Caco-2 (cell line): ENCODE measurements at regions of chr5 and their contacts with region 1.

Region 1: DNA sequence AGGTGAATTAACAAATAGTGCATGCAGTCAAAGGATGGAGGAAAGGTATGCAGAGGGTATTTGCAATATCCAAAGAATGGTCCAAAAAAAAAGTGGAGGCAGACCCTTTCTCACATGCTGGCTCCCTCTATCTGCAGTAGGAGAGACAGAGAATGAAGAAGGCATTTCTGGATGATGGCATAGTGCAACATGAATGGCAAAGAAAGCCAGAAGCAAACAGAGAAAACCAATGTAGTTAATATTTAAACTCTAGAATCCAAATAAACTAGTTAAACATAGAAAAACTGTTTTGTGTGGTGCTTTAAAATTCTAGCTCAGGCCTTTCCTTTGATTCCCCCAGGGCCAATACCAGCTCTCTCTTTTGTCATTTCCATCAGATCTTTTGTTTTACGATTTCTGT is 403.1 kb upstream of the WWC1 start:
- DNase-seq: peak in 1 of 2 experiments; percentile 28
- H3K4me3 ChIP-seq: no peak overlapping the region
- H3K4me3 Mint-ChIP-seq: no peak overlapping the region
- H3K27ac Mint-ChIP-seq: no peak overlapping the region
- H3K4me1 ChIP-seq: peaks cover 5% of the 10 kb centered on the region
- H3K4me1 Mint-ChIP-seq: peaks cover 13% of the 10 kb centered on the region
- H3K27me3 ChIP-seq: no peaks in the 10 kb centered on the region
- H3K27me3 Mint-ChIP-seq: no peaks in the 10 kb centered on the region
- CTCF ChIP-seq: peak in 1 of 2 experiments; percentile 46

Region 2: GRCh38 chr5:167626341-167627123 is 261.9 kb before region 1 on chr5:
- CTCF ChIA-PET with region 1: no interaction called
- POLR2A ChIA-PET with region 1: no interaction called
- intact Hi-C with region 1: no loop called
- DNase-seq: no peak
- H3K4me3 ChIP-seq: no peak overlapping the region
- H3K4me3 Mint-ChIP-seq: no peak overlapping the region
- H3K27ac Mint-ChIP-seq: no peak overlapping the region
- H3K4me1 ChIP-seq: no peaks in the 10 kb centered on the region
- H3K4me1 Mint-ChIP-seq: peaks cover 6% of the 10 kb centered on the region
- H3K27me3 ChIP-seq: no peaks in the 10 kb centered on the region; the same call in 1 of the 2 replicates
- H3K27me3 Mint-ChIP-seq: peaks cover 8% of the 10 kb centered on the region
- CTCF ChIP-seq: no peak

Region 3: DNA sequence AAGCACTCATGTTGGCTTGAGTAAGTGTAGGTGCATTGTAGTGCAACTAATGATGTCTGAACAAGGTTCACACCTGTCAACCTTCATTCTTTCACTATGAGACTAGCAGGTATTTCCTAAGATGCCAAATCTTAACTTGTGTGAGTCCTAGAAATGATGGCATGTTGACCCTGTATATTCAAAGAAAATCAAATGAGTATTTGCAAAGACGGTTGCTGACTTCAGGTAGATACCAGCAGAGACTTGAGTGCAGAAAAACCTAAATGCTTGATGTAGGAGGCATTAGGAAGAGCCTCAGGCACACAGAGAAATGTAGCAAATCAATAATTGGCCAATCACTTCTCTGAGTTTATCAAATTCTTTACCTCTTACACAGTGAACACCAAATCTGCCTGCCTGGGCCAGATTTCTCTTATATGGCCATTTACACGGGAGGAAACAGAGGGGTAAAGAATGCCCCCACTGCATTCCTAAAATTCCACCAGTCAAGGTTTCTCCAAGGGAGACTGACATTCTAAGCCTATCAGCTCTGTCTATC is 85.5 kb before region 1 on chr5:
- CTCF ChIA-PET with region 1: no interaction called
- POLR2A ChIA-PET with region 1: no interaction called
- intact Hi-C with region 1: loop called (anchors 2 kb)
- DNase-seq: peak; percentile 59 to 74
- H3K4me3 ChIP-seq: no peak overlapping the region
- H3K4me3 Mint-ChIP-seq: peak overlapping the region; percentile 52
- H3K27ac Mint-ChIP-seq: peak overlapping the region; percentile 95
- H3K4me1 ChIP-seq: peaks cover 34% of the 10 kb centered on the region
- H3K4me1 Mint-ChIP-seq: peaks cover 31% of the 10 kb centered on the region
- H3K27me3 ChIP-seq: no peaks in the 10 kb centered on the region
- H3K27me3 Mint-ChIP-seq: no peaks in the 10 kb centered on the region
- CTCF ChIP-seq: no peak

Region 4: DNA sequence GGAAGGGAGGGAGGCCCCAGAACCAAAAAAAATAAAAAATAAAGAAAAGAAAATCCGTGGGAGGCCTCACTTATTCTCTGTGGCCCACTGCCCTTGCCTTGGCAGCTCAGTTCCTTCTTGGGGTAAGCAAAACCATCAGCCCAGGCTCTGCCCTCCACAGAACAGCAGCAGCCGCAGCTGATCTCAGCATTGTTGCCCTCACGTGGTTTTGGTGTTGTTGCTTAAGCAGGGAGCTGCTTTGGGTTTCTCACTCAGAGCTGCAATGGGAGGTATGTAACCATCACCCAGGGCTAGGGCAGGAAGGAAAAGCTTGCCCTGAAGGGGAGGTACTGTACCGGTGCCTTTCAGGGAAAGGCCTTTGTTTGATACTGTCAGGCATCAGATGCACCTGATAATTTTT is 28.3 kb after region 1 on chr5:
- CTCF ChIA-PET with region 1: no interaction called
- POLR2A ChIA-PET with region 1: no interaction called
- intact Hi-C with region 1: loop called (anchors 2 kb)
- DNase-seq: peak; percentile 30 to 61
- H3K4me3 ChIP-seq: no peak overlapping the region
- H3K4me3 Mint-ChIP-seq: no peak overlapping the region
- H3K27ac Mint-ChIP-seq: no peak overlapping the region
- H3K4me1 ChIP-seq: peaks cover 12% of the 10 kb centered on the region
- H3K4me1 Mint-ChIP-seq: peaks cover 16% of the 10 kb centered on the region
- H3K27me3 ChIP-seq: no peaks in the 10 kb centered on the region
- H3K27me3 Mint-ChIP-seq: peaks cover 11% of the 10 kb centered on the region
- CTCF ChIP-seq: no peak